ENCODE measurements at regions of chr3 and their contacts with region 1.

Region 1: DNA sequence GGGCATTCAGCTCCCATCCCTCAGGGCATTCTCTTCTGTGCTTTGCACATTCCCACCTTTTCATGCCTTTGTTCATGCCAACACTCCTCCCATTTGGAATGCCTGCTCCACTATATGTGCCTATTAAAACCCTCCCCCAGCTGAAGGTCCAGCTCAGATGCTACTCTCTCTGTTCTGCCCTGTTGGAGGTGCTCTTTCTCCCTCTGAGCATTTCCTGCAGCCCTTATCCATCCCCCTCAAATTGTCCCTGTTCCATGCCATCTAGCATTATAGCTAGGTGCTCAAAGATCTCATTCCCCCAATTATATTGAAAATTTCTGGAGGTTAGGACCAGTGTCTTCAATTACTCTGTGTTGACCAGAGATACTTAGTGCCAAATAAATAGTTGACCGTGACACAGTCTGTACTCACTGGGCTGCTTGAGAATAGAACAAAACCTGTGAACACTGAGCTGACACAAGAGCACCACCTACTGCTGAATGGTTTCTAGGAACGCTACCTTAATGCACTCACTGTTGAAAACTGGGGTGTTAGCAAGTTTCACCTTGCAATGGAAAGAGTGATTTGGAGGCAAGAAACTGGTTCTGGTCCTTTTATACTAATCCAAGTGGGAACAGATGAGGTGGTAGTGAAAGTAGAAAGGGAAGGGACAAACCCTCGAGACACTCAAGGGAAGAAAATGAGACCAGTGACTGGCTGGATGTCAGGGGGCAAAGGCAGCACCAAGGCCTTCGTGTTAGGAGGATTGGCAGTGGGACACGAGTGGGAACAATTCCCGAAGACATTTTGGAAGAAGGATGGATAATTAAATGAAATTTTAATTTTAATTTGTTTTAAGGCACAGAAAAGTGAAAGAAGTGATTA is 289.8 kb upstream of the ROPN1 start:
- DNase-seq: no peak
- ATAC-seq: peak; percentile 68
- H3K4me3 ChIP-seq: no peak overlapping the region
- H3K27ac ChIP-seq: peak overlapping the region; percentile 61 to 90
- H3K4me1 ChIP-seq: peaks cover 10 to 18% of the 10 kb centered on the region in 2 donors
- H3K27me3 ChIP-seq: no peaks in the 10 kb centered on the region

Region 2: DNA sequence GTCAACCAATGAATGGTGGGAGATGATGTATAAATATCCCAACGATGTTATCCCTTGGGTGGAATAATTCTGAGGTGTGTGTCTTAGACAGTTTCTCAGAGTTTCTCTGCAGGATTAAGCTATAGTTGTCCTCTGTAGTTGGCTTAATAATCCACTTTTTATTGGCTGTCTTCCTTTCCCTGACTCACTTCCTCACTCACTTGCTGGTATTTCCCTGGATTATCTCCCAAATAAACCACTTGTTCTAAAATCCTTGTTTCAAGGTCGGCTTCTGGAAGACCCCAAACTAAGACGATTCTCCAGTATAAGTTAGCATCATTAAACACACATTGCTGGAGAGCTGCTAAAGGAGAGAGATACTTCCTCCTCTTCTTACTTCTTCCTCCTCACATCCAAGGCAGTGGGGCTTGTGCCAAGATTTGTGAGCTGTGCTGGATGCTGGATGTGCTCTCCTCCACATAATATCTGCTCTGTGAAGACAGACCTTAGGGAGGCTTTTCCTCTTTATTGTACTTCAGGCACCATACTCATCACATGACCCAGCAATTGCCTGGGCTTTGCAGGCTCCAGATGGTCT is 267.2 kb before region 1 on chr3:
- intact Hi-C with region 1: loop called (anchors 5 kb)
- DNase-seq: peak in 1 of 2 donors; percentile 61
- ATAC-seq: peak; percentile 40
- H3K4me3 ChIP-seq: no peak overlapping the region
- H3K27ac ChIP-seq: peak overlapping the region; percentile 36 to 85
- H3K4me1 ChIP-seq: peaks cover 6 to 8% of the 10 kb centered on the region in 2 donors
- H3K27me3 ChIP-seq: no peaks in the 10 kb centered on the region

Region 3: DNA sequence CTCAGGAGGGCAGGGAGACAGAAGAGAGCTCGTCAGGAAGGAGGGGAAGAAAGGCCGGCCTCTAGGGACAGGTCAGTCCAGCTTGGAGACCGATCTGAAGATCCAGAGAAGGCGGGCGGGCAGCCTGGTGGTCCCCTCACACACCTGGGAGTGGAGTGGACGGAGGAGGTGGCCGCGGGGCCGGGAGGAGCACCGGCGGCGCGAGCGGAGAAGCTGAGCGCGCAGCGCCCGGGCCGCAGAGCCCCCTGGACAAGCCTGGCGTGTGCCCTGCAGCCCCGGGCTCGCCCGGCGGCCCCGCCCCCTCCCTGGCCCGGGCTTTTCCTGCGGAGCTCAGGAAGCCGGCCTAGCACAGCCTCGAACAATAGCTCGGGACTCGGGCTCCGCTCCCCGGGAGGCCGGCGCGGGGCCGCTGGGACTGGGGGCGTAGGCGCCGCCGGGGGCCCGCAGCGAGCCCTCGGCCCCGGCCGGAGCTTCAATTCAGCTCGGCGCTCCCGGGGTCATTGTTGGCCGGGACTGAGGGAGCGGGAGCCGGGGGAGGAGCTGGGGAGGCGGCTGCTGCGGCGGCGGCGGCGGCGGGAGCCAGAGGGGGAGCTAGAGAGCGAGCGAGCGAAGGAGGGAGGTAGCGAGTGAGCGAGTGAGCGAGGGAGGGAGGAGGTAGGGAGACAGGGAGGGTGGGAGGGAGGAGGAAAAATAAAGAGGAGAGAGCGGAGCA is 248.9 kb before region 1 on chr3:
- intact Hi-C with region 1: loop called (anchors 5 kb)
- DNase-seq: peak; percentile 89 to 97
- ATAC-seq: peak; percentile 92
- H3K4me3 ChIP-seq: peak overlapping the region; percentile 93 to 99
- H3K27ac ChIP-seq: peak overlapping the region; percentile 85 to 92
- H3K4me1 ChIP-seq: peaks cover 0 to 5% of the 10 kb centered on the region in 2 donors
- H3K27me3 ChIP-seq: no peaks in the 10 kb centered on the region

Region 4: DNA sequence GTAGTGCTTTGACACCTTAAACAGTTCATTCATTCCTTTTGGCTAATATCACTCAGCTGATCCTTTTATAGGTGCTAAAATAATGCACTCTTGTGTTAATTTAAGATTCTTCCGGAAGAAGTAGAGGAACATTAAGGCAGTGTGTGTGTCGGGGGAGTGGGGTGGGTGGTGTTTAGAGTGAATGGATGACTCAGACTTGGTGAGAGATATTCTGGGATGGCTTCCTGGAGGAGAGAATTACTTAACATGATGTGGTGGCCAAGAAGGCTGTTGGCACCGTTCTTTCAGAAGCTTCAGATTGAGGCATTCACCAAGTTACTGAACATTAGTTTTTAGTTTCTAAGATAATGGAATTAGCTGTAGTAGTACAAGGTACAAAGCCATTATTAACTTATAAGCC is 164.2 kb before region 1 on chr3:
- intact Hi-C with region 1: loop called in 1 of 2 experiments (anchors 5 kb)
- DNase-seq: peak in 1 of 2 donors; percentile 69
- ATAC-seq: peak; percentile 71
- H3K4me3 ChIP-seq: no peak overlapping the region
- H3K27ac ChIP-seq: no peak overlapping the region
- H3K4me1 ChIP-seq: peaks cover 4 to 24% of the 10 kb centered on the region in 2 donors
- H3K27me3 ChIP-seq: no peaks in the 10 kb centered on the region

Region 5: DNA sequence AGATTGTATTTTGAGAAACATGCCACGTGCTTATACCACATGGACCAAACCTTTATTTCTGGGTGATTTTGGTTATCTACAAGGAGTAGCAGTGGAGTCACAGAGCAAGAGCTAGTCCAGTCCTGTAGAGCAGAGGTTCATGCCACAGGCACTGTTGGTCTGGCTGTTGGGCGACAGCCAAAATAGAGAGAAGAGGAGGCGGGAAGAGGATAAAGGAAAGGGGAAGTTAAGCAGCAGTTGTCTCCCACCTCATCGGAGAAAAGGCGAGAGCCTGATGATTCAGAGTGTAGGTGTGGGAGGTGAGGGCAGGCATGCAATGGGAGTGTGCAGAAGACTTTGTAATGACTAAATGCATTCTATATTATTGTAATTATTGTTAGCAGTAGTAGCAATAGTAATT is 52.3 kb before region 1 on chr3:
- intact Hi-C with region 1: no loop called
- DNase-seq: no peak
- ATAC-seq: no peak
- H3K4me3 ChIP-seq: no peak overlapping the region
- H3K27ac ChIP-seq: no peak overlapping the region
- H3K4me1 ChIP-seq: peaks cover 0 to 4% of the 10 kb centered on the region in 2 donors
- H3K27me3 ChIP-seq: no peaks in the 10 kb centered on the region

Region 6: DNA sequence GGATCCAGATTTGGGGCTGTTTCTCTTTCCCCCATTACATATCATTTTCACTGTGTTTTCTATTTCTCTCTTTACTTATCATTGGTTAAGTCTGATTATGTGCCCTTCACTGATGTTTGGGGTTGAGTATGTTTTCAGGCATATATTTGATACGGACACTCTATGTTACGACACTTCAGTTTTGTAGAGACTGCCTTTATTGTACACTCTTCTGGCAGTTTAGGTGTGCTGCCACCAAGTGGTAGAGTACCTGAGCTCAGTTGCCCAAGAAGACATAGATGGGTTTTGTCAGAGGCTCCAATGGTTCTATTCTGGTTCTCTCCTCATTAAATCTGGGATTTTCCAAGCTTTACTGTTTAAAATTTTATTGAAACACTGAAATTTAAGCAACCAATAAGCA is 34.7 kb before region 1 on chr3:
- intact Hi-C with region 1: loop called in 1 of 2 experiments (anchors 5 kb)
- DNase-seq: no peak
- ATAC-seq: no peak
- H3K4me3 ChIP-seq: no peak overlapping the region
- H3K27ac ChIP-seq: peak overlapping the region; percentile 58 to 70
- H3K4me1 ChIP-seq: peaks cover 0 to 12% of the 10 kb centered on the region in 2 donors
- H3K27me3 ChIP-seq: no peaks in the 10 kb centered on the region

Measured in aorta (tissue), 5 donors.